Spleen (tissue), 13 donors: ENCODE measurements at regions of chr19 and their contacts with region 1.

Region 1: DNA sequence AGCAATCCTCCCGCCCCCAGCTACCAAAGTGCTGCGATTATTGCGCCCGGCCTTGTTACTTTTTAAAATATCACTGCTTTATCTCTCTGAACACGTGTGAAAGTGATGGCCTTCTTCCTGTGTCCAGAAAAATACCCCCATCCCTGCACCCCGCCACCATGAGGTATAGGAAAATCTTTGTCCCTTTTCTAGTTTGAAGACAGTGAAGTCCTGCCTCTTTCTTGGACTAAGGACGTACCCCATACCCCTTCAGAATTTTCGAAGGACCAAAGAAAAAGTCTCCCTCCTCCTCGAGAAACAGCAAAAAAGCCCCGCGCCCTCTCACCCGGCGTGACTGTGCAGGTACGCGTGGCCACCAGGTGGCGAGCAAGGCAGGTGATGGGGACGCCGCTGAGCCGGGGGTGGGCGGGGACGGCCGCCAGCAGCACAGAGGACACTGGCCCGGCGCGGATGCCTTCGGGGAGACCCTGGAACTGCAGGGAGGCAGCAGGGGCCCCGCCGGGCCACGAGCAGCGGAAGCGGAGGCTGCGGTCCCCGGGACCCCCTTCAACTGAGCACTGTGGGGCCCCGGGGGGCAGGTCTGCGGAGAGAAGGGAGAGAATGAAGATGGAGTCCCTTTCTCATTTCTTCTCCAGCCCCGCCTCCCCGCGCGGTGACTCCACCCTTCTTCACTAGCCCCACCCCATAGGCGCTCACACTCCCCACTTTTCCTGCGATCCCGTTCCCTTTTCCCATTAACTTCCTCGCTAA is 3.2 kb downstream of the VSIG10L start:
- DNase-seq: peak; percentile 96
- H3K4me3 ChIP-seq: peak overlapping the region; percentile 61 to 92 (median 72)
- H3K27ac ChIP-seq: peak overlapping the region in 7 of 8 donors; percentile 41 to 85 (median 69)
- H3K4me1 ChIP-seq: peaks cover 9 to 45% (median 24%) of the 10 kb centered on the region in 6 donors
- H3K27me3 ChIP-seq: peaks cover 0 to 12% (median 0%) of the 10 kb centered on the region in 7 donors
- CTCF ChIP-seq: peak; percentile 80 to 95 (median 89)
- POLR2A ChIP-seq: no peak

Region 2: DNA sequence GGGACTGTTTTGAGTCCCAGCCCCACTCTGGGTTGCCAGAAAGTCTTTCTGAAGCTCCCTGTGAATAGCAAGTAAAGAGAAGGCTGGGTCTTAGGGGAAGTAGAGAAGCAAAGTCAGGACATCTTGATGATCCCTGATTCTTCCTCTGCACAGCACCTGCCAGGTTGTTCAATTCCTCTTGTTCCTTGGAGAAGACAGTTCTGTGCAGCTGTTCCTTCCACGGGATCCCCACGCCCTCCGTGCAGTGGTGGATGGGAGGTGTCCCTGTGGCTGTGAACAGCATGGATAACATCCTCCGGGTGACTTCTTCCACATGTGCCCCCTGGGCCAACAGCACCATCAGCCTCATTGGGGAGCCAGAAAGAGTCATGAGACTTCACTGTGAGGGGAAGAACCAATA is 56.4 kb before region 1 on chr19:
- intact Hi-C with region 1: no loop called
- DNase-seq: no peak
- H3K4me3 ChIP-seq: no peak overlapping the region
- H3K27ac ChIP-seq: no peak overlapping the region
- H3K4me1 ChIP-seq: no peaks in the 10 kb centered on the region
- H3K27me3 ChIP-seq: peaks cover 0 to 45% (median 0%) of the 10 kb centered on the region in 7 donors
- CTCF ChIP-seq: no peak
- POLR2A ChIP-seq: no peak

Region 3: DNA sequence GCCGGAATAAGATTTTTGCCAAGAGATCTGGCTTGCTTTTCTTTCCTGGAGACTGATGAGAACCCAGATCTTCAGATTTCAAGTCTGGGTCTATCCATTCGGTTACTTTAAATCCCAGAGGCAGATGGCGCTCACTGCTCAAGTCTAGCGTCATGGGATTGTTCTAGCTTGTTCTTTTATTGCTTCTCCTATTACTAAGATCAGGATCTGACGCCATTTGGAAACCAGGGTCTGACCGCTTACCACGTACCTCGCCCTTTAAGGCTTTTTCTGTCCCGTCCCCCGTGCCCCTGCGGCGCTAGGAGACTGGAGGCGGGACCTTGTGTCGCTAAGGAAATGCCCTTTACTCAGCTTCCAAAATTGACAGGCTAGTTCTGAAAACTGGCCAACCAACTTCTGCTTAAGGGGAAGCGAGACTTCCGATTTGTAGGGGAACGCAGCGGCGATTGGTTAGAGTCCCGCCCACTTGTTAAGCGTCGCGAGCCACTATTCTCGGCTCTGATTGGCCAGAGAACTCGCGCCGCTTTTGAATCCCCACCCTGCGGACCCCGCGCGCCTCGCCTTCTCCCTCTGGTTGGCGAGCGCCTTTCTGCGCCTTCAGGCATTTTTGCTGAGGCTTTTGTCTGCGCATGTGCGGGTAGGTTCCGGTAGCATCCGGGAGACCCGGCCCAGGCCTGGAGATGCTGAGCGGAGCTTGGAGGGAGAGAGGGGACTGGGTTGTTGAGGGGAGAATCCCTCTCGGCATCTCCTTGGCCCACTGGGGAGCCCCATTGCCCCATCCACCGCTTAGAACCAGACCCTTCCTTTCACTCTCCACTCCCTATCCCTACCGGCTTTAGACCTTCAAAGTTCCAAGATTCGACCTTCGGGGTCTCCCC is 55.5 kb after region 1 on chr19:
- intact Hi-C with region 1: loop called (anchors 10 kb)
- DNase-seq: peak; percentile 95
- H3K4me3 ChIP-seq: peak overlapping the region; percentile 16 to 66 (median 34)
- H3K27ac ChIP-seq: peak overlapping the region; percentile 76 to 89 (median 83)
- H3K4me1 ChIP-seq: peaks cover 4 to 56% (median 27%) of the 10 kb centered on the region in 6 donors
- H3K27me3 ChIP-seq: peaks cover 0 to 4% (median 0%) of the 10 kb centered on the region in 7 donors
- CTCF ChIP-seq: peak in 3 of 11 experiments; percentile 7 to 39 (median 17)
- POLR2A ChIP-seq: no peak

Region 4: GRCh38 chr19:51441410-51442390 is 103.0 kb after region 1 on chr19:
- intact Hi-C with region 1: loop called (anchors 5 kb)
- DNase-seq: peak; percentile 90
- H3K4me3 ChIP-seq: peak overlapping the region in 4 of 8 donors; percentile 12 to 55 (median 19)
- H3K27ac ChIP-seq: peak overlapping the region in 6 of 8 donors; percentile 20 to 64 (median 46)
- H3K4me1 ChIP-seq: peaks cover 11 to 48% (median 32%) of the 10 kb centered on the region in 6 donors
- H3K27me3 ChIP-seq: peaks cover 0 to 44% (median 5%) of the 10 kb centered on the region in 7 donors
- CTCF ChIP-seq: peak in 3 of 11 experiments; percentile 11 to 33 (median 29)
- POLR2A ChIP-seq: no peak

Region 5: DNA sequence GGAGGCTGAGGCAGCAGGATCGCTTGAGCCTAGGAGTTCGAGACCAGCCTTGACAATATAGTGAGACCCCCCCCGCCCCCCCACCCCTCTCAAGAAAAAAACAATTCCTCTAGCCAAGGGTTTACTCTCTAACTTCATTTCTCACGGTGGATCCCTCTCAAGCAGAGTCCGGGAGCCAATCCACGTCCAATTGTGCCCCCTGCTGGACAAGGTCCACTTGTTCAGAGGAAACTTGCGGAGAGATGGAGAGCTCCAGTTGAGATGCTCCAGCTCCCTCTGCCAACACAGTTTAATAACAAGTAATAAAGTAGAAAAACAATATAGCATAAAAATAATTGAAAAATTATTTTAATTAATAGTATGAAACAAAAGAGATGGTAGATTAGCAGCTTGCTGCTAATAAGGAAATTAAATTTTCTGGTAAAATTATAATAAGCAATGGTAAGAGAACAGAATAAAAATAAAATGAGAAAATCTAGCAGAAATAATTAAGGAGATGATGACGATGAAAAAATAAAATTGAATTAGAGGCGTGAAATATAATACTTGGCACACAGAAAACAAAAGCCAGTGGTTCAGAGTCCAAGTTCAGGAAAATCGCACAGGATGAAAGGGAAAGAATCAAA is 322.4 kb after region 1 on chr19:
- intact Hi-C with region 1: loop called (anchors 5 kb)
- DNase-seq: peak; percentile 90
- H3K4me3 ChIP-seq: no peak overlapping the region
- H3K27ac ChIP-seq: no peak overlapping the region
- H3K4me1 ChIP-seq: peaks cover 3 to 27% (median 8%) of the 10 kb centered on the region in 6 donors
- H3K27me3 ChIP-seq: peaks cover 0 to 51% (median 13%) of the 10 kb centered on the region in 7 donors
- CTCF ChIP-seq: peak; percentile 33 to 76 (median 56)
- POLR2A ChIP-seq: no peak